ENCODE measurements at regions of chr10 and their contacts with region 1.

Region 1: DNA sequence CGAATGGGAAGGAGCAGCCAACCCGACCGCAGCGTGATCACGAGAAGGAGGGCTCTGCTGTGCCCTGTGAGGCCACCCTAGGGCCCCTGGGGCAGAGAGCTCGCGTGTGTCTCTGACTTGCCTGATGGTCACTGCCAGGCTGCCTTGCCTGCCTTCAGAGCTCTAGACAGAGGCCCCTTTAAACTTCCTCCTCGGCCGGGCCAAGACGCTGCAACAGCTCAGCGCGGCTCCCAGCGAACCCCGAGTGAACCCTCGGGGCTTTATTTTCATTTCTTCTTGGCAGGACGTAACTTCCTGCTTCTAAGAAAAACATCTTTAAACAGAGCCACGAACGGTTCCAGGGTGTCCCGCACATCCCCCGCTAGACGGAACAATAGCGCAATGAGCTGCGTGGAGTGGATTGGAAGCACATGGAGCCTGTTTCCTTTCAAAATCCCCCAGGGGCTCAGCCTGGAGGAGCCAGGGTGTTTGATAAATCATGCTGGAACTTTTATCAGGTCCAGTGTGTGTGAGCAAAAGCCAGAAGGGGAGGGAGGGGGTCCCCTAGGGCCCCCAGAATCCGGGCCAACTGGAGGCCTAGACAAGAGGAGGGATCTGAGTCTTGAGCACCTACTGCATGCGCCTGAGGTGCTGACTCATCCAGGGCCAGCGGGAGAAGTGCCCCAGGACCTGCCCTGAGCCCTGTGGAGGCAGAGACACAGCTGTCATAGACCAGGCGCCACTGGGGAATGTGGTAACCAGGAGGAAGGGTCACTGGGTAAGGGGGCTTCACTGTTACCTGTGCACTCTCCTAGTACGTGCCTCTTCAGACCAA is 134.1 kb upstream of the GDF10 start:
- DNase-seq: peak; percentile 89 to 94 (median 92)
- H3K4me3 ChIP-seq: peak overlapping the region in 1 of 3 experiments; percentile 63
- H3K4me3 Mint-ChIP-seq: peak overlapping the region; percentile 67 to 87
- H3K27ac ChIP-seq: peak overlapping the region; percentile 69 to 90
- H3K27ac Mint-ChIP-seq: peak overlapping the region; percentile 93 to 99 (median 96)
- H3K4me1 ChIP-seq: peaks cover 55 to 64% of the 10 kb centered on the region in 2 donors
- H3K4me1 Mint-ChIP-seq: peaks cover 59% of the 10 kb centered on the region
- H3K27me3 ChIP-seq: no peaks in the 10 kb centered on the region
- H3K27me3 Mint-ChIP-seq: peaks cover 0 to 9% (median 1%) of the 10 kb centered on the region in 3 donors
- CTCF ChIP-seq: no peak

Region 2: GRCh38 chr10:47137311-47137851 is 28.5 kb before region 1 on chr10:
- intact Hi-C with region 1: loop called in 1 of 2 experiments (anchors 5 kb)
- DNase-seq: peak in 1 of 3 donors; percentile 23
- H3K4me3 ChIP-seq: no peak overlapping the region
- H3K4me3 Mint-ChIP-seq: no peak overlapping the region
- H3K27ac ChIP-seq: no peak overlapping the region
- H3K27ac Mint-ChIP-seq: no peak overlapping the region
- H3K4me1 ChIP-seq: peaks cover 27 to 29% of the 10 kb centered on the region in 2 donors
- H3K4me1 Mint-ChIP-seq: peaks cover 28% of the 10 kb centered on the region
- H3K27me3 ChIP-seq: no peaks in the 10 kb centered on the region
- H3K27me3 Mint-ChIP-seq: peaks cover 0 to 7% (median 1%) of the 10 kb centered on the region in 3 donors
- CTCF ChIP-seq: no peak

Region 3: DNA sequence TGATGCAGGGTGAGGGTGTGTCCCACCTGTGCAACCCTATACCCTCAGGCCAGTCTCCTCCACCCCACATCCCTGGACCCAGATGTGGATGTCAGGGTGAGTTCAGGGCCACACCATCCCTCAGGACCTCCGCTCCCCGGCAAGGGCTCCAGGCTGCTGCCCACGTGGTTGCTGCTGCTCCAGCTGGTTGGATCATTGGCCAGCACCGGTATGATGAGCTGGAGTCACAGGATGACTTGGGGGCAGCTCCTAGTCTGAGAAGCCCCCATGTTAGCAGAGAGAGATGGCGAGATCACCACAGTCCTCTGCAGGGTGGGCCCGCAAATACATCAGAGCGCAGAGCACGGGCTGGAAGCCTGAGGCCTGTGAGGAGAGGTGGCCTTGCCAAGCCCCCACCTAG is 30.8 kb after region 1 on chr10:
- intact Hi-C with region 1: no loop called
- DNase-seq: no peak
- H3K4me3 ChIP-seq: no peak overlapping the region
- H3K4me3 Mint-ChIP-seq: no peak overlapping the region
- H3K27ac ChIP-seq: no peak overlapping the region
- H3K27ac Mint-ChIP-seq: no peak overlapping the region
- H3K4me1 ChIP-seq: no peaks in the 10 kb centered on the region
- H3K4me1 Mint-ChIP-seq: no peaks in the 10 kb centered on the region
- H3K27me3 ChIP-seq: no peaks in the 10 kb centered on the region
- H3K27me3 Mint-ChIP-seq: peaks cover 0 to 7% (median 0%) of the 10 kb centered on the region in 3 donors
- CTCF ChIP-seq: no peak

Region 4: GRCh38 chr10:47257396-47258120 is 91.6 kb after region 1 on chr10:
- intact Hi-C with region 1: loop called (anchors 2 to 5 kb)
- DNase-seq: peak; percentile 78 to 94 (median 87)
- H3K4me3 ChIP-seq: peak overlapping the region in 1 of 3 experiments; percentile 51
- H3K4me3 Mint-ChIP-seq: peak overlapping the region; percentile 45 to 76
- H3K27ac ChIP-seq: peak overlapping the region; percentile 81 to 89
- H3K27ac Mint-ChIP-seq: peak overlapping the region; percentile 87 to 98 (median 95)
- H3K4me1 ChIP-seq: peaks cover 73 to 78% of the 10 kb centered on the region in 2 donors
- H3K4me1 Mint-ChIP-seq: peaks cover 83% of the 10 kb centered on the region
- H3K27me3 ChIP-seq: no peaks in the 10 kb centered on the region
- H3K27me3 Mint-ChIP-seq: peaks cover 7 to 14% (median 12%) of the 10 kb centered on the region in 3 donors
- CTCF ChIP-seq: no peak

Measured in CD14-positive monocyte (primary cell).